ENCODE measurements at regions of chr6 and their contacts with region 1.

Region 1: DNA sequence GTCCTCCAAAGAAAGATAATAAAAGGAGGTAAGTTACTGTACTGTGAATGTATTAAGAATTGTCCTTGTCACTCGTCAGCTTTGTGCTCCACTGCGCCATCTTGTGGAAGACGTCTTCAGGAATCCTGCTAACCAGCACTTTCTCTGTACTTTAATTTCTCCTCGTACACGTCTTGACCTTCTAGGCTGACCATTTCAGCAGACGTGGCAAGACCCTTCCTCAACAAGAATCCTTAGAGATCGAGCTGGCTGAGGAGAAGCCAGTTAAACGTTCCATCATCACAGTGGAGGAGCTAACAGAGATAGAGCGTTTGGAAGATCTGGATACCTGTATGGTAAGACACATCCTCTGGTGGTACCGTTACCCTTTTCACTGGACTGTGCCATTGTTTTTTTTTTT is 95.5 kb upstream of the SCGN start:
- DNase-seq: peak; percentile 33 to 78 (median 52)
- H3K4me3 ChIP-seq: no peak overlapping the region
- H3K4me3 Mint-ChIP-seq: no peak overlapping the region
- H3K27ac ChIP-seq: no peak overlapping the region
- H3K27ac Mint-ChIP-seq: no peak overlapping the region
- H3K4me1 ChIP-seq: no peaks in the 10 kb centered on the region
- H3K4me1 Mint-ChIP-seq: peaks cover 0 to 4% (median 3%) of the 10 kb centered on the region in 3 donors
- H3K27me3 ChIP-seq: no peaks in the 10 kb centered on the region
- H3K27me3 Mint-ChIP-seq: peaks cover 0 to 3% of the 10 kb centered on the region in 2 donors

Region 2: GRCh38 chr6:25223490-25223991 is 333.0 kb before region 1 on chr6:
- CTCF ChIA-PET with region 1: interaction called, 15 read pairs
- POLR2A ChIA-PET with region 1: no interaction called
- DNase-seq: peak; percentile 30 to 65 (median 37)
- H3K4me3 ChIP-seq: no peak overlapping the region
- H3K4me3 Mint-ChIP-seq: peak overlapping the region in 6 of 7 donors; percentile 23 to 78 (median 74)
- H3K27ac ChIP-seq: no peak overlapping the region
- H3K27ac Mint-ChIP-seq: no peak overlapping the region
- H3K4me1 ChIP-seq: no peaks in the 10 kb centered on the region
- H3K4me1 Mint-ChIP-seq: peaks cover 9 to 12% (median 11%) of the 10 kb centered on the region in 3 donors
- H3K27me3 ChIP-seq: no peaks in the 10 kb centered on the region
- H3K27me3 Mint-ChIP-seq: peaks cover 9 to 12% of the 10 kb centered on the region in 2 donors

Region 3: DNA sequence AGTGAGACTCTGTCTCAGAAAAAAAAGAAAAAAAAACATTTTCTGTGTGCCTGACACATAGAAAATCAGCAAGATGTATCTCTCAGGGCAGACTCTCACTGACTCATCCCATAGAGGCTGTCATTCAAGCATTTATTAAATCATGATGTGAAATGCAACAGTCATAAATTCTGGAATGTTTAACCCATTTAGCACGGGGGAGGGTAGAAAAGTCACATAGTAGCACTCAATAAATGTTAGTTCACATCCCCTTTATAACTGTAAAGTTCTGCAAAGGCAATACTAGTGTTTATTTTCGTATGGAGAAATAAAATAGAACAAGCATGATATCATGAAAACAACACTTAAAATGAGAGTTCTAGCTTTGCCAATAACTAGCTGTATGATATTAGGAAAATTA is 292.9 kb before region 1 on chr6:
- CTCF ChIA-PET with region 1: interaction called, 23 read pairs
- POLR2A ChIA-PET with region 1: no interaction called
- DNase-seq: no peak
- H3K4me3 ChIP-seq: no peak overlapping the region
- H3K4me3 Mint-ChIP-seq: no peak overlapping the region
- H3K27ac ChIP-seq: no peak overlapping the region
- H3K27ac Mint-ChIP-seq: no peak overlapping the region
- H3K4me1 ChIP-seq: no peaks in the 10 kb centered on the region
- H3K4me1 Mint-ChIP-seq: peaks cover 0 to 4% (median 3%) of the 10 kb centered on the region in 3 donors
- H3K27me3 ChIP-seq: no peaks in the 10 kb centered on the region
- H3K27me3 Mint-ChIP-seq: peaks cover 0 to 6% of the 10 kb centered on the region in 2 donors

Region 4: DNA sequence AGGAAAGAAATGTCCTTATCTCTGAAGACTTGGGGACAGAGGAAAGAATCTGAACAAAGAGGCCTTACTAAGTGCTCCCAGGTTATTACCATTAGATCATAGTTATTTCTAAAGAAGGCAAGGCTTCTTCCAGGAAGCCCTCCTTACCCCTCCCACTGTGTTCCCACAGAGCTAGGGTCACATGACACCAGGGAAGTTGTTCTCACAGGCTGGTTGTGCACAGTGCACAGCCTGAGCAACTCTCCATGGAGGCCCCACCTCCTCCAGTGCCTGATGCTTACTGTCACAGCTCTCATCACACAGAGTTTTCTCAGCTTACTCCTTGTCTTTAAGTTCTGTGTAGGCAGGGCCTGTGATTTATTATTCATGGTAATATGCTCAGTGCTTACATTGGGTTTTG is 26.6 kb after region 1 on chr6:
- CTCF ChIA-PET with region 1: no interaction called
- POLR2A ChIA-PET with region 1: no interaction called
- DNase-seq: no peak
- H3K4me3 ChIP-seq: no peak overlapping the region
- H3K4me3 Mint-ChIP-seq: no peak overlapping the region
- H3K27ac ChIP-seq: no peak overlapping the region
- H3K27ac Mint-ChIP-seq: no peak overlapping the region
- H3K4me1 ChIP-seq: no peaks in the 10 kb centered on the region
- H3K4me1 Mint-ChIP-seq: peaks cover 9 to 11% (median 10%) of the 10 kb centered on the region in 3 donors
- H3K27me3 ChIP-seq: no peaks in the 10 kb centered on the region
- H3K27me3 Mint-ChIP-seq: peaks cover 0 to 1% of the 10 kb centered on the region in 2 donors

Region 5: DNA sequence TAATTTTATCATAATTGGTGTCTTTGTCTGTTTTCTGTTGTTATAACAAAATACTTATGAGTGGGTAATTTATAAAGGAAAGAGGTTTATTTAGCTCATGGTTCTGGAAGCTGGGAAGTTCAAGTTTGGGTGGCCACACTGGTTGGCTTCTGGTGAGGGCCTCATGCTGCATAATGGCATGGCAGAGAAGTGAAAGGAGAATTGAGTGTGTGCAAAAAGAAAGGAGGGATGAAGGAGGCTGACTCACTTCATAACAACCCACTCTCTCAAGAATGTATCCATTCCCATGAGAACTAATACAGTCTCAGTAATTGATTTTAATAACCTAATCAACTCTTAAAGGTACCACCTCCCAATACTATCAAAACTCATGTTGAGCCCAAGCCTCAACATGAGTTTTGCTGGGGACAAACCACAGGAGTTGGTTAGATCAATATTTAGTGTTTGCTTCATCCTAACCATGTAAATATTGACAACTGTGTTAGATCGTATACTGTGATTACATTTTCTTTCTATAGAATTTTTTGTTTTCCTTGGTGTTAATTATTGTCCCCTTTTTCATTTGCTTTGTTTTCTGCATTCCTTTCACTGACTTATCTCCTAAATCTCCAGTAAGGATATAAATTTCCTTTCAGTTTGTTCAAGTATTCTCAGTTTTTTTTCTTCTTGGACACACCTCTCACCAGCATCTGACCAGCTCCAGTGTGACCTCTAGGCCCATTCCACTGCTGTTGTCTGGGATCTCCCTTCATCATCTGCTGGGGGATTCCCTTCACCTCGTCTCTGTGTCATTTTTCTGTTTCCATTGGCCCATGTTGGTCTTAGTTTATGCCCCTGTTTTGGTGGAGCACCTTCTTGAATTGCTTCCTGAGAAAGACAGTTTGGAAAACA is 40.7 kb after region 1 on chr6:
- CTCF ChIA-PET with region 1: no interaction called
- POLR2A ChIA-PET with region 1: no interaction called
- DNase-seq: no peak
- H3K4me3 ChIP-seq: no peak overlapping the region
- H3K4me3 Mint-ChIP-seq: no peak overlapping the region
- H3K27ac ChIP-seq: no peak overlapping the region
- H3K27ac Mint-ChIP-seq: peak overlapping the region in 2 of 8 donors; percentile 28 to 64
- H3K4me1 ChIP-seq: no peaks in the 10 kb centered on the region
- H3K4me1 Mint-ChIP-seq: no peaks in the 10 kb centered on the region
- H3K27me3 ChIP-seq: no peaks in the 10 kb centered on the region
- H3K27me3 Mint-ChIP-seq: peaks cover 0 to 12% of the 10 kb centered on the region in 2 donors

Region 6: DNA sequence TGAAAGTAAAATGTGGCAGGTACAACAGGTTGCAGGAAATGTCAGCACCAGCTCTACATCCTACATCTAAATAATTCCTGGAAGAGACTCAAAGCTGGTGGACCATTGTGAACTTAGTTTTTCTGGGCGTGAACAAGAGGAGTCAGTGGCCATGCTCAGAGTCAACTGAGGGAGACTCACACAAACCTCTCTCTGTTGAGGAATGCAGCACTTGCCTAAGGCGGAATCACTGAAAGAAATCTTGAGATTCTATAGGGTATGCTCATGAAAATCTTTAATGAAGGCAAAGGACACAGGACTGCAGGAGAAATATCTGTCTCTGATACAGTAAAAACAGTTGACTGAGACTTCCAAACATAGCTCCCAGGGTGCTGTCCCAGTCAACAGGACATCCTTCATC is 220.5 kb after region 1 on chr6:
- CTCF ChIA-PET with region 1: no interaction called
- POLR2A ChIA-PET with region 1: no interaction called
- DNase-seq: no peak
- H3K4me3 ChIP-seq: no peak overlapping the region
- H3K4me3 Mint-ChIP-seq: no peak overlapping the region
- H3K27ac ChIP-seq: no peak overlapping the region
- H3K27ac Mint-ChIP-seq: no peak overlapping the region
- H3K4me1 ChIP-seq: no peaks in the 10 kb centered on the region
- H3K4me1 Mint-ChIP-seq: no peaks in the 10 kb centered on the region
- H3K27me3 ChIP-seq: no peaks in the 10 kb centered on the region
- H3K27me3 Mint-ChIP-seq: peaks cover 11 to 25% of the 10 kb centered on the region in 2 donors

Measured in CD8-positive, alpha-beta memory T cell (primary cell).